ENCODE measurements at regions of chr11 and their contacts with region 1.

Region 1: GRCh38 chr11:77471558-77472193 is 2.2 kb downstream of the PAK1 start:
- DNase-seq: peak; percentile 38
- H3K4me3 Mint-ChIP-seq: no peak overlapping the region
- H3K27ac Mint-ChIP-seq: no peak overlapping the region
- H3K4me1 Mint-ChIP-seq: peaks cover 30% of the 10 kb centered on the region
- H3K27me3 Mint-ChIP-seq: peaks cover 37% of the 10 kb centered on the region

Region 2: GRCh38 chr11:77411717-77412441 is 59.8 kb before region 1 on chr11:
- CTCF ChIA-PET with region 1: interaction called, 11 read pairs
- DNase-seq: peak; percentile 90
- H3K4me3 Mint-ChIP-seq: peak overlapping the region; percentile 88
- H3K27ac Mint-ChIP-seq: peak overlapping the region; percentile 84
- H3K4me1 Mint-ChIP-seq: peaks cover 49% of the 10 kb centered on the region
- H3K27me3 Mint-ChIP-seq: no peaks in the 10 kb centered on the region

Region 3: DNA sequence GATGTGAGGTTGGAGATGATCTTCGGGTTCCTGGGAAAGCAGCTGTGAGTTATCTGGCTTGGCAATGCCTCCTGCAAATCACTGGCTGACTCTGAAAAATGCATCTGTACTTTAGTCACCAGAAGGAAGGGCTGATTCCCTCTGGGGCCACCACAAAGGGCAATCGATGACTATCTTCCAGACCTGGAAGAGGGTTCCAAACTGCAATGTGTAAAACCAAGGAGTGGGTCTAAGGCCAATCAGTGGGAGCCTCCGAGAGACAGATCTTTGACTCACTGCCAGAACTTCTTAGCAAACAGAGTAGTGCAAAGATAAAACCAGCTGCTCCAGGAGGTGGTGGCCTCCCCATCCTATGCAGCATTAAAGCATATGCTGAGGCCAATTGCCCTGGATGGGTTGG is 31.3 kb after region 1 on chr11:
- CTCF ChIA-PET with region 1: no interaction called
- DNase-seq: no peak
- H3K4me3 Mint-ChIP-seq: no peak overlapping the region
- H3K27ac Mint-ChIP-seq: no peak overlapping the region
- H3K4me1 Mint-ChIP-seq: no peaks in the 10 kb centered on the region
- H3K27me3 Mint-ChIP-seq: peaks cover 45% of the 10 kb centered on the region

Region 4: DNA sequence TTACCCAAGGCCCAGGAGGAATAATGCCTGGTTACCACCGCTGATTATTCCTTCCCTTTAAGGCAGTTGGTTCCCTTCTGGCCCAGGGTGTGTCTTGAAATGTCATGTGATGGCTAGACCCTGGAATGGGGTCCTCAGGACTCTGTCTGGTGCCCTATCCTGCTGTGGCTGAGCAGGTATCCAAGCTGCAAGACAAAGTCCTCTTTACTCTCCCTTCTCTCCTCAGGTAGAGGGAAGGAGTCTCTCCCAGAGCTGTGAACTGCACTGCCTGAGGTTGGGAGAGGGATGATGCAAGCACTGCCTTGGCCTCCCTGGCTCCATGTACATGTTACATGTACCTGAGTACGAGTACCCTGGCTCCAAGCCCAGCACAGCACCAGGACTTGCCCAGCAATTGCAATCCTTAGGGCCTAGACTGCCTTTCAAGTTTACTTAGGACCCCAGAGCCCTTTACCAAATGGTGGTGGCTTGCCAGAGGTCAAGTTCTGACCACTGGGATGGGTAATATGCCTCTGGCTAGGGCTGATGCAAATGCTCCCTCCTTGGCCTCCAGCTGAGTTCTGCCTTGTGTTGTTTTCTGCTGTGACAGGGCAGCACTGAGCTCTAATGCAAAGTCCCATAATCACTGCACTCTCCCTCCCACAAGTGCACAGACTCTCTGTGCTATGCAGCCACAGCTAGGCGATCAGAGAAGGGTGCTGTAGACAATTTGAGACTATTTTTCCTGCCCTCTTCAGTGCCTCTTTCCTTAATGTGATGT is 97.4 kb after region 1 on chr11:
- CTCF ChIA-PET with region 1: no interaction called
- DNase-seq: no peak
- H3K4me3 Mint-ChIP-seq: no peak overlapping the region
- H3K27ac Mint-ChIP-seq: no peak overlapping the region
- H3K4me1 Mint-ChIP-seq: no peaks in the 10 kb centered on the region
- H3K27me3 Mint-ChIP-seq: peaks cover 23% of the 10 kb centered on the region

Measured in activated naive CD4-positive, alpha-beta T cell treated with anti-CD3 and anti-CD28 coated beads, Interleukin-2, amount 10 ng/mL, durations not matched to agents 7 days and 5 days (primary cell).